ENCODE measurements at regions of chr7 and their contacts with region 1.

Region 1: GRCh38 chr7:148940702-148941597 is 56.9 kb upstream of the EZH2 start:
- DNase-seq: peak; percentile 60
- H3K4me3 ChIP-seq: peak overlapping the region; percentile 72
- CTCF ChIP-seq: no peak

Region 2: DNA sequence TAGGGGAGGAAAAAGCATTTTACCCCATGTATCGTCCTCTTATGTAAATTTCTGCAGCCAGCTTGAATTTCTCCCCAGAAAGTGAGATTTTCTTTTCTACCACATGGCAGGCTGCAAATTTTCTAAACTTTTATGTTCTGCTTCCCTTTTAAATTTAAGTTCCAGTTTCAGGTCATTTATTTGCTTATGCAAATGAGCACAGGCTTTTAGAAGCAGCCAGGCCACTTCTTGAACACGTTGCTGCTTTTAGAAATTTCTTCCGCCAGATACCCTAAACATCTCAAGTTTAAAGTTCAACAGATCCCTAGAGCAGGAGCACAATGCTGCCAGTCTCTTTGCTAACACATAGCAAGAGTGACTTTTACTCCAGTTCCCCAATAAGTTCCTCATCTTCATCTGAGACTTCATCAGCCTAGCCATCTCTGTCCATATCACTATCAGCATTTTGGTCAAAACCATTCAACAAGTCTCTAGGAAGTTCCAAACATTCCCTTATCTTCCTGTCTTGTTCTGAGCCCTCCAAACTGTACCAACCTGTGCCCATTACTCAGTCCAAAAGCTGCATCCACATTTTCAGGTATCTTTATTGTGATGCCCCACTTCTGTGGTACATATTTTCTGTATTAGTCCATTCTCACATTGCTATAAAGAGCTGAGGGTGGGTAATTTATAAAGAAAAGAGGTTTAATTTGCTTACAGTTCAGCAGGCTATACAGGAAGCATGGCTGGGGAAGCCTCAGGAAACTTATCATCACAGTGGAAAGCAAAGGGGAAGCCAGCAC is 73.2 kb before region 1 on chr7:
- in situ Hi-C with region 1: no loop called
- DNase-seq: no peak
- H3K4me3 ChIP-seq: no peak overlapping the region
- CTCF ChIP-seq: no peak

Region 3: DNA sequence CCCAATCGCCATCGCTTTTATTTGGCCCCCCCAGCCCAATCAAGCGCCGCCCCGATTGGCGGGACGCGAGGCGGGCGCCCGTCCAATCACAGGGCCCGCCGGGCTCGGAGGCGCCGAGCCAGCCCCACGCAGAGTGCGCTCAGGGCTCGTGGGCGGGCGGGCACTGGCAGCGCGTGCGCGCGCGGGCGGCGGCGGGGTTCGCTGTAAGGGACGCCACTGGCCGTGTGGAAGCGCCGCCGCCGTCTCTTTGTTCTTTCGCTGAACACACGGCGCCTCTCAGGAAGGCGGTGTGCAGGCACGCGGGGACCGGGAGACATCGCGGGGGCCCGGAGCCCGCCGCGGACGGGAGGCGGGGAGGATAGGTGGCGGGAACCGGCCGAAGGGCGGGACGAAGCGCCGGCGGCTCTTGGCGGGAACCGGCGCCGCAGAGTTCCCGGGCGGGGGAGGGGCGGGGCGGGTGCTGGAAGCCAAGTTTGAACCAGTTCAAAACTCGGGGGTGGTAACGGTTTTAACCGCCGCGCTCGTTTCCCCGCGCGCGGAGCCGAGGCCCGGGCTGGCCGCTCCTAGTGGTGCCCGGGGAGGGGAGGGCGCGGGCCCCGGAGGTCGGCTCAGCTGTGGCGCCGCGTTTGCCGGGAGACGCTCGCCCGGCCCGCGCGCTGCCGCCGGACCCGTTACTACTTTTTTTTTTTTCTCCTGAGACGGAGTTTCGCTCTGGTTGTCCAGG is 56.5 kb before region 1 on chr7:
- in situ Hi-C with region 1: no loop called
- DNase-seq: peak; percentile 73
- H3K4me3 ChIP-seq: peak overlapping the region; percentile 79
- CTCF ChIP-seq: no peak

Region 4: GRCh38 chr7:148983187-148984146 is 42.5 kb after region 1 on chr7:
- in situ Hi-C with region 1: loop called (anchors 5 kb)
- DNase-seq: peak; percentile 51
- H3K4me3 ChIP-seq: peak overlapping the region; percentile 58
- CTCF ChIP-seq: no peak

Measured in astrocyte of the cerebellum (primary cell).